Activated CD8-positive, alpha-beta T cell treated with anti-CD3 and anti-CD28 coated beads for 36 hours (primary cell): ENCODE measurements at regions of chr16 and their contacts with region 1.

Region 1: GRCh38 chr16:88785106-88785924 is at the start of gene PIEZO1:
- DNase-seq: peak; percentile 72
- ATAC-seq: peak; percentile 3
- H3K4me3 Mint-ChIP-seq: peak within 1 kb of the TSS; percentile 68
- H3K27ac Mint-ChIP-seq: peak within 1 kb of the TSS; percentile 83
- H3K4me1 Mint-ChIP-seq: peaks cover 42% of the 10 kb centered on the region
- H3K27me3 Mint-ChIP-seq: no peaks in the 10 kb centered on the region
- CTCF ChIP-seq: peak; percentile 90
- total RNA-seq, gene PIEZO1: 87.7 to 91.8 TPM

Region 2: DNA sequence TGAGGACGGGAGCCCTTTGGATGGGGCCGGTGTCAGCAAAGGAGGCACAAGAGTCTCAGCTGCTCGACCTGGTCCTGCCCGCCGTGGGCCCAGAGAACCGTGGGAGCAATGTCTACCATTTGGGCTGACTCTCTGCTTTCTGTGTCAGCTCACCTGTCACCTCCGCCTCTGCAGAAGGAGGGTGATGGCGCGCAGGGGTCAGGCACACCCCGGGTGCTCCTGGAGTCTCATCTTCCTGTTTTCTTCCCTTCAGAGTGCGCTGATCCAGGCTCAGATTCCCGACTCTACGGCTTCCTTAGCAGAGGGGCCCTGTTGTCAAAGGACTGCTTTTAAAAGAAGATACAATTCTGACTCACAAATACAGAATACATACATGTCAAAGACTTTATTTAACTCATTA is 666.9 kb before region 1 on chr16:
- CTCF ChIA-PET with region 1: no interaction called
- POLR2A ChIA-PET with region 1: no interaction called
- intact Hi-C with region 1: no loop called
- DNase-seq: no peak
- ATAC-seq: no peak
- H3K4me3 Mint-ChIP-seq: no peak overlapping the region
- H3K27ac Mint-ChIP-seq: no peak overlapping the region
- H3K4me1 Mint-ChIP-seq: no peaks in the 10 kb centered on the region
- H3K27me3 Mint-ChIP-seq: no peaks in the 10 kb centered on the region
- CTCF ChIP-seq: no peak

Region 3: DNA sequence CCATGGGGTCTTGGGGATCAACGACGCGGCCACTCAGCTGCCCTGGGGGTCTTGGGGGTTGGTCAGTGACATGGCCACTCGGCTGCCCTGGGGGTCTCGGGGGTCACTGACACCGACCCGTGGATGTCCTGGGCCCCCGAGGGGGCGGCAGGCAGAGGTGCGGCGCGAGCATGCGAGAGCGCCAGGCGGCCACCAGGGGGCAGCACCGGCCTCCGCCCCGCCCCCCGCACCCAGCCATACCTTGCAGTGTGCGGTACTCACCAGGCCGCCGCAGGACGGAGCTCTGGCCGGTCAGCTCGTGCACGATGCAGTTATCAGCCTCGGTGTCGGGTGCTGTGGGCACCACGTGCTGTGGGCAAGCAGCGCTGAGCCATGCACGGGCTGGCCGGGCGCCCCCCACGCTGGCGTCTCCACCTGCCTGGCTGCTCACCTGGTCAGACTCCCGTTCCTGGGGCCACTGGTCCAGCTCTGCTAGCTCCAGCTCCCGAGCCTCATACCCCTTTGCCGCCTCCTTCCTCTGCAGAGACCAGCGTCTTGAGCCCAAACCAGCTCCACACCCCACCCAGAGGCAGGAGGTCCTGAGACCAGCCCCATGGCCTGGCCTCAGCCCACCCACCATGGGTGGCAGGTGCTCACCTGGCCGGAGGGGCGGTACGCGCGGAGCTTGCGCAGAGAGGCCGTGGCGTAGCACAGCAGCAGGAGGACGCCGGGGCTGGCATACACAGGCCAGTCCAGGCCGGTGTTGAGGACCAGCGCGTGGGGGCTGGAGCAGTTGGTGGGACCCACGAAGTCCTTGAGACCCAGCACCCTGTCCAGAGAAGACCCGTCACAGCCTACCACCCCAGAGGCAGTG is 47.8 kb before region 1 on chr16:
- CTCF ChIA-PET with region 1: interaction called, 37 read pairs
- POLR2A ChIA-PET with region 1: interaction called, 8 read pairs
- intact Hi-C with region 1: loop called (anchors 5 kb)
- DNase-seq: peak; percentile 65
- ATAC-seq: peak; percentile 93
- H3K4me3 Mint-ChIP-seq: no peak overlapping the region
- H3K27ac Mint-ChIP-seq: no peak overlapping the region
- H3K4me1 Mint-ChIP-seq: no peaks in the 10 kb centered on the region
- H3K27me3 Mint-ChIP-seq: no peaks in the 10 kb centered on the region
- CTCF ChIP-seq: peak; percentile 99

Region 4: GRCh38 chr16:88754912-88755744 is 30.2 kb before region 1 on chr16:
- CTCF ChIA-PET with region 1: interaction called, 10 read pairs
- POLR2A ChIA-PET with region 1: interaction called, 4 read pairs
- intact Hi-C with region 1: no loop called
- DNase-seq: peak; percentile 35
- ATAC-seq: peak; percentile 72
- H3K4me3 Mint-ChIP-seq: no peak overlapping the region
- H3K27ac Mint-ChIP-seq: no peak overlapping the region
- H3K4me1 Mint-ChIP-seq: peaks cover 14% of the 10 kb centered on the region
- H3K27me3 Mint-ChIP-seq: no peaks in the 10 kb centered on the region
- CTCF ChIP-seq: peak; percentile 17

Region 5: GRCh38 chr16:88803264-88803987 is 18.1 kb after region 1 on chr16 and contains the start of gene CDT1:
- CTCF ChIA-PET with region 1: interaction called, 9 read pairs
- POLR2A ChIA-PET with region 1: interaction called, 81 read pairs
- intact Hi-C with region 1: no loop called
- DNase-seq: peak; percentile 76
- ATAC-seq: peak; percentile 57
- H3K4me3 Mint-ChIP-seq: peak within 1 kb of the TSS; percentile 81
- H3K27ac Mint-ChIP-seq: peak within 1 kb of the TSS; percentile 89
- H3K4me1 Mint-ChIP-seq: peaks cover 14% of the 10 kb centered on the region
- H3K27me3 Mint-ChIP-seq: no peaks in the 10 kb centered on the region
- CTCF ChIP-seq: no peak
- total RNA-seq, gene CDT1: 180 to 182 TPM

Region 6: GRCh38 chr16:88856828-88857733 is 71.8 kb after region 1 on chr16 and contains the starts of genes GALNS and TRAPPC2L:
- CTCF ChIA-PET with region 1: interaction called, 16 read pairs
- POLR2A ChIA-PET with region 1: no interaction called
- intact Hi-C with region 1: no loop called
- DNase-seq: peak; percentile 100
- ATAC-seq: peak; percentile 92
- H3K4me3 Mint-ChIP-seq: peak within 1 kb of the TSS; percentile 92
- H3K27ac Mint-ChIP-seq: peak within 1 kb of the TSS; percentile 87
- H3K4me1 Mint-ChIP-seq: peaks cover 31% of the 10 kb centered on the region
- H3K27me3 Mint-ChIP-seq: no peaks in the 10 kb centered on the region
- CTCF ChIP-seq: no peak
- total RNA-seq, gene GALNS: 24.5 to 25.4 TPM
- total RNA-seq, gene TRAPPC2L: 56.4 to 61.9 TPM